ENCODE measurements at regions of chr5 and their contacts with region 1.

Region 1: DNA sequence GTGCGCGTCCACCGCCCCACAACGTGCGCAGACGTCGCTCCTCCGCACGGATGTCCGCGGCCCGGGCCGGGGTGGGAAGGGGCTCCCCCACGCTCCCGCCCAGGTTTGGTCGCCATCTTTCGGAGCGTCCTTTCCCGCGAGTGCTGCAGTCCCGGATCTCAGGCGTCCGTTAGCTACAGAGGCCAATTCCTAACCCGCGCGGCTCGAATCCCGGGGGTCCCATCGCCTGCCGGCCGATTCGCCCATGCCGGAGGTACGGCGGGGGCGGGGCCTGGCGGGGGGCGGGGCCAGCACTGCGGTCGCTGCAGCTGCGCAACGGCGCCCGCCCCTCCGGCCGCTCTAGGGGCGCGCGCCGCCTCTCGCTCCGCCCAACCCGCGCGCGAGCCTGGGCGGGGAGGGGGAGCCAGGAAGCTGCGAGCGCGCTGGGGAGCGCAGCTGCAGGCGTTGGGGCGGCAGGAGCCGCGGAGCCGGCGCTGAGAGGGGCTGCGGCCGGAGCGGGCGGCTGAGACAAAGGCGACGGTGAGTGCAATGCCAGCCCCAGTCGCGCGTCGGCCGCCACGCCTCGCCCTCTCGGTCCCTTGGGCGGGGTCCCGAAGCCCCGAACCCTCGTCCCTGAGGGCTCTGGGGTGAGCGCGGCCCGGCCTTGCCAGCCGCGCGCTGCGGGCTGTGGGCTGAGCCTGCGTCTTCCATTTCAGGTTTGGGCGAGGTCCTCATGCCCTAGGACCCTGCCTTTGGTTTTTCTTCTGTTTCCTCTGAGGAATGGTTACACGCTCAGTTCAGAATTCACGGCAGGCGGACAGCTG is at the start of gene CDC42SE2:
- DNase-seq: peak; percentile 88
- H3K4me3 ChIP-seq: peak within 1 kb of the TSS; percentile 93 to 99 (median 99)
- H3K27ac ChIP-seq: peak within 1 kb of the TSS; percentile 77
- H3K4me1 ChIP-seq: peaks cover 32% of the 10 kb centered on the region
- H3K27me3 ChIP-seq: no peaks in the 10 kb centered on the region
- CTCF ChIP-seq: no peak
- total RNA-seq, gene CDC42SE2: 26.0 to 87.4 TPM

Region 2: DNA sequence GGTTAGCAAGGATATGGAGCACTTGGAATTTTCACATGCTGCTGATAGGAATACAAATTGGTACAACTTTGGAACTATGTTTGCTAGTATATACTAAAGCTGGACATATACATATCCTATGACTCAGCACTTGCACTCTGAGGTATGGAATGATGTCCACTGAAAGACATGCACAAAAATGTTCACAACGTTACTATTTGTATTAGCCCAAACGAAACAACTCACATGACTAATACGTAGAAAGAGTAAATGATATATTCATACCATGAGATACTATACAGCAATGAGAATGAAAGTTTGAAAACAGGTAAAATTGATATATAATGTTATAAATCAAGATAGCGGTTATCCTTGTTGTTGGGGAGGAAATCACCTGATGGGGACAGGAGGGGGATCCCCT is 45.5 kb before region 1 on chr5:
- CTCF ChIA-PET with region 1: no interaction called
- dilution Hi-C with region 1: loop called (anchors 5 kb)
- in situ Hi-C with region 1: no loop called
- intact Hi-C with region 1: loop called (anchors 2 kb)
- DNase-seq: peak; percentile 9
- H3K4me3 ChIP-seq: no peak overlapping the region
- H3K27ac ChIP-seq: no peak overlapping the region
- H3K4me1 ChIP-seq: peaks cover 15% of the 10 kb centered on the region
- H3K27me3 ChIP-seq: no peaks in the 10 kb centered on the region
- CTCF ChIP-seq: no peak

Region 3: DNA sequence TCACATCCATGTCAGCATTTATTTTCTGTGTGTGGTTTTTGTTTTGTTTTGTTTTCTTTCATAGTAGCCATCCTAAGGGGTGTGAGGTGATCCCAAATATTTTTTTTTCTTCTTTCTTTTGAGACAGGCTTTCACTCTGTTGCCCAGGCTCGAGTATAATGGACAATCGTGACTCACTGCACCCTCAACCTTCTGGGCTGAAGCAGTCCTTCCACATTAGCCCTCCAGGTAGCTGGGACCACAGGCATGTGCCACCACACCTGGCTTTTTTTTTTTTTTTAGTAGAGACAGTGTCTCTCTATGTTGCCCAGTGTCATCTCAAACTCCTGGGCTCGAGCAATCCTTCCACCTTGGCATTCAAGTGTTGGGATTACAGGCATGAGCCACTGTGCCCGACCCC is 59.1 kb after region 1 on chr5:
- CTCF ChIA-PET with region 1: no interaction called
- dilution Hi-C with region 1: no loop called
- in situ Hi-C with region 1: no loop called
- intact Hi-C with region 1: loop called (anchors 2 kb)
- DNase-seq: peak; percentile 77
- H3K4me3 ChIP-seq: no peak overlapping the region
- H3K27ac ChIP-seq: peak overlapping the region; percentile 58
- H3K4me1 ChIP-seq: peaks cover 20% of the 10 kb centered on the region
- H3K27me3 ChIP-seq: no peaks in the 10 kb centered on the region
- CTCF ChIP-seq: no peak

Region 4: GRCh38 chr5:131382407-131383395 is 118.9 kb after region 1 on chr5:
- CTCF ChIA-PET with region 1: no interaction called
- dilution Hi-C with region 1: no loop called
- in situ Hi-C with region 1: no loop called
- intact Hi-C with region 1: loop called (anchors 1 kb)
- DNase-seq: peak; percentile 65
- H3K4me3 ChIP-seq: no peak overlapping the region
- H3K27ac ChIP-seq: no peak overlapping the region
- H3K4me1 ChIP-seq: no peaks in the 10 kb centered on the region
- H3K27me3 ChIP-seq: no peaks in the 10 kb centered on the region
- CTCF ChIP-seq: peak; percentile 71 to 73

Measured in mammary epithelial cell (primary cell).